ENCODE measurements at regions of chr17 and their contacts with region 1.

Region 1: DNA sequence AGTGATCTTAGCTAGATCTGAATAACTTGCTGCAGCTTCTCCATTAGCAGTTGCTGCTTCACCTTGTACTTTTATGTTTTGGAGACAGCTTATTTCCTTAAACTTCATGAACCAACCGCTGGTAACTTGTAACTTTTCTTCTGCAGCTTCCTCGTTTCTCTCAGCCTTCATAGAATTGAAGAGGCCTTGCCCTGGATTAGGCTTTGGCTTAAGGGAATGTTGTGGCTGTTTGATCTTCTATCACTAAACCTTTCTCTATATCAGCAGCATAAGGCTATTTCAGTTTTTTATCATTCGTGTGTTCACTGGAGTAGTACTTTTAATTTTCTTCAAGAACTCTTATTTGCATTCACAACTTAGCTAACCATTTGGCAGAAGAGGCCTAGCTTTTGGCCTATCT is 21.5 kb upstream of the TMEM92 start:
- DNase-seq: no peak
- H3K4me3 ChIP-seq: no peak overlapping the region
- H3K27ac ChIP-seq: no peak overlapping the region
- H3K4me1 ChIP-seq: no peaks in the 10 kb centered on the region
- H3K27me3 ChIP-seq: peaks cover 7 to 8% of the 10 kb centered on the region in 2 experiments
- CTCF ChIP-seq: no peak
- POLR2A ChIP-seq: no peak

Region 2: GRCh38 chr17:50318501-50319285 is 65.9 kb after region 1 on chr17:
- CTCF ChIA-PET with region 1: no interaction called
- POLR2A ChIA-PET with region 1: interaction called, 10 read pairs
- dilution Hi-C with region 1: no loop called
- intact Hi-C with region 1: no loop called
- DNase-seq: no peak
- H3K4me3 ChIP-seq: no peak overlapping the region
- H3K27ac ChIP-seq: no peak overlapping the region
- H3K4me1 ChIP-seq: no peaks in the 10 kb centered on the region
- H3K27me3 ChIP-seq: peaks cover 21 to 26% of the 10 kb centered on the region in 2 experiments
- CTCF ChIP-seq: no peak
- POLR2A ChIP-seq: no peak